Activated naive CD4-positive, alpha-beta T cell treated with anti-CD3 and anti-CD28 coated beads for 36 hours (primary cell): ENCODE measurements at regions of chr11 and their contacts with region 1.

Region 1: GRCh38 chr11:130002846-130003716 is 446 bp upstream of the PRDM10 start:
- DNase-seq: peak; percentile 94
- H3K4me3 Mint-ChIP-seq: peak overlapping the region; percentile 98
- H3K27ac Mint-ChIP-seq: peak overlapping the region; percentile 100
- H3K4me1 Mint-ChIP-seq: peaks cover 28% of the 10 kb centered on the region
- H3K27me3 Mint-ChIP-seq: no peaks in the 10 kb centered on the region

Region 2: GRCh38 chr11:128052912-128053641 is 1950.0 kb before region 1 on chr11:
- CTCF ChIA-PET with region 1: no interaction called
- intact Hi-C with region 1: loop called (anchors 5 kb)
- DNase-seq: no peak
- H3K4me3 Mint-ChIP-seq: peak overlapping the region; percentile 49
- H3K27ac Mint-ChIP-seq: peak overlapping the region; percentile 86
- H3K4me1 Mint-ChIP-seq: peaks cover 67% of the 10 kb centered on the region
- H3K27me3 Mint-ChIP-seq: no peaks in the 10 kb centered on the region

Region 3: GRCh38 chr11:129364143-129364654 is 638.9 kb before region 1 on chr11:
- CTCF ChIA-PET with region 1: no interaction called
- intact Hi-C with region 1: loop called (anchors 2 kb)
- DNase-seq: peak; percentile 90
- H3K4me3 Mint-ChIP-seq: no peak overlapping the region
- H3K27ac Mint-ChIP-seq: no peak overlapping the region
- H3K4me1 Mint-ChIP-seq: no peaks in the 10 kb centered on the region
- H3K27me3 Mint-ChIP-seq: peaks cover 43% of the 10 kb centered on the region

Region 4: GRCh38 chr11:129853518-129854236 is 149.4 kb before region 1 on chr11:
- CTCF ChIA-PET with region 1: no interaction called
- intact Hi-C with region 1: loop called (anchors 2 kb)
- DNase-seq: peak; percentile 84
- H3K4me3 Mint-ChIP-seq: no peak overlapping the region
- H3K27ac Mint-ChIP-seq: peak overlapping the region; percentile 86
- H3K4me1 Mint-ChIP-seq: peaks cover 38% of the 10 kb centered on the region
- H3K27me3 Mint-ChIP-seq: no peaks in the 10 kb centered on the region

Region 5: DNA sequence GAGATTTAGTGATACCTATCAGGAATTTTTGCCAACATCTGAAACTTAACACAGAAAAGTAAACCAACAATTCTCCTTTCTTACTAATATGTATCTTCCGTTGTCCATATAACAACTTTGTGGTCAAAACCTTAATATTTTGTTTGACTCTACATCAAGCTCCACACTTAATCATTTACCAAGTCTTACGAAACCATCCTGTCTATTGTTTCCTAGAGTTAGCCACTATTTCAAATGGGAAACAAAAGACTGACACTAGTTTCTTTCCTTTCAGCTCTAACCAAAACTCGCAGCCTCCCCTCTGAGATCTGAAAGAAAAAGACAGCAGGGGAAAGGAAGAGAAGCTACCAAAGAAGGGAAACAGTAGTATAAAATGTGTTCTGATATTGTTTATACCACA is 26.1 kb after region 1 on chr11:
- CTCF ChIA-PET with region 1: no interaction called
- intact Hi-C with region 1: no loop called
- DNase-seq: no peak
- H3K4me3 Mint-ChIP-seq: no peak overlapping the region
- H3K27ac Mint-ChIP-seq: no peak overlapping the region
- H3K4me1 Mint-ChIP-seq: peaks cover 2% of the 10 kb centered on the region
- H3K27me3 Mint-ChIP-seq: no peaks in the 10 kb centered on the region

Region 6: DNA sequence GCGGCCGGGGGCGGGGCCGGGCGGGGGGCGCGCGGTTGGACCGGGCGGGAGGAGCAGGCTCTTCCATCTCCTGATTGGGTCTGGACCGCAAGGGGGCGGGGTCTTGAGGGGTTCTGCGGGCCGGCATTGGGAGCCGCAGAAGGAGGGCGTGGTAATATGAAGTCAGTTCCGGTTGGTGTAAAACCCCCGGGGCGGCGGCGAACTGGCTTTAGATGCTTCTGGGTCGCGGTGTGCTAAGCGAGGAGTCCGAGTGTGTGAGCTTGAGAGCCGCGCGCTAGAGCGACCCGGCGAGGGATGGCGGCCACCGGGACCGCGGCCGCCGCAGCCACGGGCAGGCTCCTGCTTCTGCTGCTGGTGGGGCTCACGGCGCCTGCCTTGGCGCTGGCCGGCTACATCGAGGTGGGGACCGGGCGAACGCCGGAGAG is 66.6 kb after region 1 on chr11 and contains the start of gene APLP2:
- CTCF ChIA-PET with region 1: interaction called, 4 read pairs
- intact Hi-C with region 1: loop called (anchors 1 kb)
- DNase-seq: peak; percentile 98
- H3K4me3 Mint-ChIP-seq: peak within 1 kb of the TSS; percentile 91
- H3K27ac Mint-ChIP-seq: peak within 1 kb of the TSS; percentile 86
- H3K4me1 Mint-ChIP-seq: peaks cover 23% of the 10 kb centered on the region
- H3K27me3 Mint-ChIP-seq: peaks cover 4% of the 10 kb centered on the region
- total RNA-seq, gene APLP2: 38.4 to 43.5 TPM

Region 7: DNA sequence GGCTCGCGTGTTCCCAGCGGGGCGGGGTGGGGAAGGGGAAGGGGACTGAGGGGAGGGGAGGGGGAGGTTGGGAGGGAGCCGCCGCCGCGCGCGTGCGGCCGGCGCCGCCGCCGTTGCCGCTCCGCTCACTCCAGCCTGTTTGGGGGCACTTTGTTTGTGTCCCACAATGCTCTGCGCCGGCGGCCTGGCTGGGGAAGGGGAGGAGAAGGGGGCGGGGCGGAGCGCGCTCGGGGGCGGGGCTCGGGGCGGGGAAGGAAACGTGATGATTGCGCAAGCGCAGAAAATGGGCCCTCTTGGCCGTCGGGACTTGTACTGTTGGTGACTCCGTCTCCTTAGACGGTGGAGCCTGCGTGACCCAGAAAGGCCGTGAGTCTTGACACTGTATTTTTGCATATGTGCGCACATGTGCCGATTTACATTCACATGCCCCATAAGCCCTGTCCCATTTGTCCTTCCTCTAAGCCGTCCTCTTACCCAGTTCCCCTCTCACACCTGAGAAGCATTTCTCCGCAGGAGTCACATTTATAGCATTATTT is 311.7 kb after region 1 on chr11 and contains the start of gene ZBTB44:
- CTCF ChIA-PET with region 1: no interaction called
- intact Hi-C with region 1: loop called (anchors 1 kb)
- DNase-seq: peak; percentile 92
- H3K4me3 Mint-ChIP-seq: peak within 1 kb of the TSS; percentile 92
- H3K27ac Mint-ChIP-seq: peak within 1 kb of the TSS; percentile 94
- H3K4me1 Mint-ChIP-seq: peaks cover 21% of the 10 kb centered on the region
- H3K27me3 Mint-ChIP-seq: no peaks in the 10 kb centered on the region
- total RNA-seq, gene ZBTB44: 35.0 to 39.8 TPM